ENCODE measurements at regions of chr19 and their contacts with region 1.

Region 1: GRCh38 chr19:57888560-57889231 is at the start of gene ZNF814:
- DNase-seq: peak; percentile 55
- ATAC-seq: peak; percentile 95
- H3K4me3 ChIP-seq: peak within 1 kb of the TSS; percentile 83
- H3K27ac ChIP-seq: peak within 1 kb of the TSS; percentile 85
- H3K4me1 ChIP-seq: no peaks in the 10 kb centered on the region
- H3K27me3 ChIP-seq: no peaks in the 10 kb centered on the region
- CTCF ChIP-seq: peak; percentile 13 to 35 (median 17); a peak in 3 of 6 replicates
- EP300 ChIP-seq: no peak; a peak in 1 of 4 replicates
- POLR2A ChIP-seq: peak; percentile 89
- RAD21 ChIP-seq: no peak
- polyA plus RNA-seq, gene ZNF814: 22.4 to 23.5 TPM

Region 2: GRCh38 chr19:57406516-57407123 is 482.1 kb before region 1 on chr19:
- CTCF ChIA-PET with region 1: no interaction called
- POLR2A ChIA-PET with region 1: no interaction called
- RAD21 ChIA-PET with region 1: no interaction called
- SMC1A ChIA-PET with region 1: no interaction called
- in situ Hi-C with region 1: no loop called
- intact Hi-C with region 1: loop called (anchors 10 kb)
- DNase-seq: peak; percentile 17
- ATAC-seq: peak; percentile 85
- H3K4me3 ChIP-seq: no peak overlapping the region
- H3K27ac ChIP-seq: no peak overlapping the region
- H3K4me1 ChIP-seq: no peaks in the 10 kb centered on the region
- H3K27me3 ChIP-seq: no peaks in the 10 kb centered on the region
- CTCF ChIP-seq: peak; percentile 70 to 89 (median 88)
- EP300 ChIP-seq: no peak
- POLR2A ChIP-seq: no peak
- RAD21 ChIP-seq: peak; percentile 86